HEK293 (cell line): ENCODE measurements at regions of chr17 and their contacts with region 1.

Region 1: GRCh38 chr17:66255112-66255511 is 25.9 kb upstream of the APOH start:
- H3K4me3 ChIP-seq: no peak overlapping the region
- H3K27ac ChIP-seq: no peak overlapping the region
- H3K4me1 ChIP-seq: peaks cover 6% of the 10 kb centered on the region
- CTCF ChIP-seq: peak; percentile 38; the same call in 1 of the 2 replicates

Region 2: DNA sequence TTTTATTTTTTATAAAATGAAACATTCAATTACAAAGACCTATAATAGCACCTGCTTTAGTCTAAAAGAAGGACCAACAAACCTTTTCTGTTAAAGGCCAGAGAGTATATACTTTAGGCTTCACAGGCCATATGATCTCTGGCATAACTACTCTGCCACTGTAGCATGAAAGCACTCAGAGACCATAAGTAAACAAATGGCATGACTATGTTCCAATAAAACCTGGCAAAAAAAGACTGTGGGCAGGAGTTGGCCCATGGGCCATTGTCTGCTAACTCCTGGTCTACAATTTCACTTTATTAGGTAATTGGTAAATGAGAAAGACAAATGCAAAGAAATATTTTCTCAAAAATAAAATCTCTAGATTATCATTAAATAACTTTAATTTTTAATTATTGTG is 78.1 kb before region 1 on chr17:
- CTCF ChIA-PET with region 1: no interaction called
- POLR2A ChIA-PET with region 1: no interaction called
- H3K4me3 ChIP-seq: no peak overlapping the region
- H3K27ac ChIP-seq: no peak overlapping the region
- H3K4me1 ChIP-seq: peaks cover 15% of the 10 kb centered on the region; the same call in 1 of the 2 replicates
- CTCF ChIP-seq: no peak

Region 3: GRCh38 chr17:66567234-66568170 is 312.4 kb after region 1 on chr17:
- CTCF ChIA-PET with region 1: interaction called, 32 read pairs
- POLR2A ChIA-PET with region 1: no interaction called
- H3K4me3 ChIP-seq: no peak overlapping the region
- H3K27ac ChIP-seq: no peak overlapping the region
- H3K4me1 ChIP-seq: peaks cover 24% of the 10 kb centered on the region
- CTCF ChIP-seq: 0 out of 2 replicates have a peak, but pooled peaks have one; percentile 43

Region 4: GRCh38 chr17:66620528-66620927 is 365.4 kb after region 1 on chr17:
- CTCF ChIA-PET with region 1: interaction called, 12 read pairs
- POLR2A ChIA-PET with region 1: no interaction called
- H3K4me3 ChIP-seq: no peak overlapping the region
- H3K27ac ChIP-seq: no peak overlapping the region
- H3K4me1 ChIP-seq: no peaks in the 10 kb centered on the region
- CTCF ChIP-seq: no peak

Region 5: DNA sequence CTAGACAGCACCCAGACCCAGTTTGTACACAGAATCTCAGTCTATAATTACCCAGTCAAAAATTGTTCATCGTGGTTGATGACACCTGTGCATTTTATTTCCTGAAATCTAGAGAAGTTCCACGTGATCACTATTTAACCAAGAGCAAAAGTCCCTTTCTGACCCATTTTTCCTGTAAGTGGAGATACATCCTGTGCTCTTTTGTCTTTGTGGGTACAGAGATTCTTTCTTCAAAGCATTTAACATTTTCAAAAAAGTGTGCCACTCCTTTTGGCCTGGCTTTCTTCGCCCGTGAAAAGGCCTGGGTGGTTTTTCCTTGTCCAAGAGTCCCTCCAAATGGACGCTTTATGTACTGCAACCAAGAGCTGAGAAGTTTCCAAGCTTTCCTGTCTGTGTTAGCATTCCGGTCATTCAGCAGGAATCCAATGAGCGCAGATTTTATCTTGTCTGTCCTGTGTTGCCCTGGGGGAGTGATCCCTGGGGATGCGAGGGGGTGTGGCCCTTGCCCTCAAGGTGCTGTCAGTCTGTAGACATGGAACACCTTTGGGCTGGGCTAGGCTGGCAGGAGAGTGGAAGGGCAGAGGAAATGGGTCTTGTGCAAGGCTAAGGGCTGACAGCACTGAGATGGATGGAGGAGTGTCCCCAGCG is 418.7 kb after region 1 on chr17:
- CTCF ChIA-PET with region 1: interaction called, 18 read pairs
- POLR2A ChIA-PET with region 1: no interaction called
- H3K4me3 ChIP-seq: no peak overlapping the region
- H3K27ac ChIP-seq: no peak overlapping the region
- H3K4me1 ChIP-seq: no peaks in the 10 kb centered on the region; the same call in 1 of the 2 replicates
- CTCF ChIP-seq: peak; percentile 26; the same call in 1 of the 2 replicates